ENCODE measurements at regions of chr5 and their contacts with region 1.

Region 1: GRCh38 chr5:158074992-158075769 is 216.2 kb upstream of the CLINT1 start:
- DNase-seq: peak; percentile 80

Region 2: GRCh38 chr5:158054223-158055110 is 20.7 kb before region 1 on chr5:
- CTCF ChIA-PET with region 1: interaction called, 12 read pairs
- POLR2A ChIA-PET with region 1: no interaction called
- DNase-seq: peak; percentile 47

Region 3: DNA sequence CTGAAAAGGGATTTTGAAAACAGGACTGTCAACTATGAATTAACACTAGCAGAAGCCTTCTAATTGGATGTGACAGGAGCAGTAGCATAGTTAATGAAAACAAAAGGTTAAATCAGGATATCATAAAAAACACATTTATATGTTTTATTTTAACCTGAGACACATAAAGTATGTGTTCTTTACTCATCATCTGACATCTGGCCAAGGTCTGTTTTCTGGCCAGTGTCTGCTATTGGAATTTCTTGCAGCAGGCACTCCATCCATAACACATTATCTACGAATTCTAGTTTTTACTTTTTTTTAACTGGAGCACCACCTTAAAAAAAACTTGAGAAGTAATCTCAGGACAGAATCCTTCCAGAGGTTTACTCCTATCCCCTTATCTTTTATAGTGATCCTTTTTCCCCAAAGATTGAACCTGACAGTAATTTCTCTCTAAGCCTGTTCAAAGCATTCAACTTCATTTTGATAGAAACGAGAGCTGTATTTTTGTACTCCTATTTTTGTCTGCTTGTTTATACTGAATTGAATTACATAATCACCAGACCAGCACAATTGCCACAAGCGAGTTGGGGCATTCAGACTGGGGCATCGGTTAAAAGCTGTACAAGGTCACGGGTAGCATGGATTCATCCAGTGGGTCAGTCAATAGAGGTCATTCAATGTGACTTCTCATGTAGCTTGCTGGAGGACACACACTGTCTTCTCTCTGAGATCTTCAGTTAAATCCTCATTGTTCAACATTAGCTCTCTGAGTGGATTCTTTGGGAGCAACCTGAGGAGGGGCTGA is 10.7 kb before region 1 on chr5:
- CTCF ChIA-PET with region 1: interaction called, 12 read pairs
- POLR2A ChIA-PET with region 1: no interaction called
- DNase-seq: no peak

Region 4: DNA sequence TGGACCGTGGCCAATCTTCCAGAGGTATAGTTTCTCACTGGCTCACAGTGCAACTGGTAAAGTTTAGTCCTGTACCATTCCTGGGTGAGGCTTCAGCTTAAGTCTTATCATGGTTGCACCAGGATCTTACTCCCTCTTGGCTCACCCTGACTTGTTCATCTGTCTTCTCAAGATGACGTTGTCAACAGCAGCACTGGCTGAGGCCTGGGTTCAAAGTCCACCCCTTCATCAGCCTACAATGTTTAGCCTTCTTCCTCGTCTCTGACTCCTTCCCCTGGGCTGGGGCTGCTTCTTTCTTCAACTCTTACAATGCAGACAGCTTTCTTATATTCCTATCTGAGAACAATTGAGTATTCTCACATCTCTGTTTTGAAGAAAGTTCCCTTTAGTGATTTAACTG is 94.9 kb after region 1 on chr5:
- CTCF ChIA-PET with region 1: interaction called, 17 read pairs
- POLR2A ChIA-PET with region 1: no interaction called
- DNase-seq: no peak